HAP-1 (cell line): ENCODE measurements at regions of chr7 and their contacts with region 1.

Region 1: DNA sequence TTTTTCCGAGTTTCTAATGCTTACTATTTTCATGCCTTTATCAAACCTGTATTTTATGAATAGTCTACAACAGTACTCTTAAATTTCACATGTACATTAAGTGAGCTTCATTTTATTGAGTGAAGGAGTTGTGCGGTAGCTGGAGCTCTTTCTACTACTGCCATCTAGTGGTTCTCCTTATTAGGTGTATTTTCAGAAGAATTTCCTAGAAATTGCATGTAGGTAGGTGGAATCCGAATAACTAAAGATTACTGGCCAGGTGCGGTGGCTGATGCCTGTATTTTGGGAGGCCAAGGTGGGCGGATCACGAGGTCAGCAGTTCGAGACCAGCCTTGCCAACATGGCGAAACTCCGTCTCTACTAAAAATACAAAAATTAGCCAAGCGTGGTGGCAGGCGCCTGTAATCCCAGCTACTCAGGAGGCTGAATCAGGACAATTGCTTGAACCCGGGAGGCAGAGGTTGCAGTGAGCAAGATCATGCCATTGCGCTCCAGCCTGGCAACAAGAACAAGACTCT is 38.3 kb downstream of the LRRC72 start:
- DNase-seq: peak; percentile 25 to 76
- H3K4me3 ChIP-seq: no peak overlapping the region
- H3K4me1 ChIP-seq: peaks cover 3% of the 10 kb centered on the region
- H3K27me3 ChIP-seq: no peaks in the 10 kb centered on the region

Region 2: DNA sequence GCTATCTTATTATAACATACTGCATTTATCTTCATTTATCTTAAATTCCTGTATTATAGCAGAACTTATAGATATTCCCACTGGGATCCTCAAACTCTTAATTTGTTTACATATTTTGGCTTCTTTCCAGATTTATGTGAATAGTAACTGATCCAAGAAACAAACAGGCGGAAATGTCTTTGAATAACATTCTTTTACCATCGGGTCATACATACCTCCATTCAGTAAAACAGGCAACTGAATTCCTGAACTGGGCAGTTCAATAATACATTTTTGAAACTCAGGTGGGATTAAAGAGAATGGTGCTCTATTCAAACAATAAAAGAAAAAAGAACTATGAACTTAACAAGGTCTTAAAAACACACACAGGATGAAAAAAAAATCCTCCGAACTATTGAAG is 481.0 kb before region 1 on chr7:
- in situ Hi-C with region 1: loop called (anchors 10 kb)
- DNase-seq: peak in 1 of 2 experiments; percentile 40
- H3K4me3 ChIP-seq: no peak overlapping the region
- H3K4me1 ChIP-seq: 0 out of 2 replicates have a peak, but pooled peaks cover 2% of the 10 kb centered on the region
- H3K27me3 ChIP-seq: peaks cover 6% of the 10 kb centered on the region

Region 3: DNA sequence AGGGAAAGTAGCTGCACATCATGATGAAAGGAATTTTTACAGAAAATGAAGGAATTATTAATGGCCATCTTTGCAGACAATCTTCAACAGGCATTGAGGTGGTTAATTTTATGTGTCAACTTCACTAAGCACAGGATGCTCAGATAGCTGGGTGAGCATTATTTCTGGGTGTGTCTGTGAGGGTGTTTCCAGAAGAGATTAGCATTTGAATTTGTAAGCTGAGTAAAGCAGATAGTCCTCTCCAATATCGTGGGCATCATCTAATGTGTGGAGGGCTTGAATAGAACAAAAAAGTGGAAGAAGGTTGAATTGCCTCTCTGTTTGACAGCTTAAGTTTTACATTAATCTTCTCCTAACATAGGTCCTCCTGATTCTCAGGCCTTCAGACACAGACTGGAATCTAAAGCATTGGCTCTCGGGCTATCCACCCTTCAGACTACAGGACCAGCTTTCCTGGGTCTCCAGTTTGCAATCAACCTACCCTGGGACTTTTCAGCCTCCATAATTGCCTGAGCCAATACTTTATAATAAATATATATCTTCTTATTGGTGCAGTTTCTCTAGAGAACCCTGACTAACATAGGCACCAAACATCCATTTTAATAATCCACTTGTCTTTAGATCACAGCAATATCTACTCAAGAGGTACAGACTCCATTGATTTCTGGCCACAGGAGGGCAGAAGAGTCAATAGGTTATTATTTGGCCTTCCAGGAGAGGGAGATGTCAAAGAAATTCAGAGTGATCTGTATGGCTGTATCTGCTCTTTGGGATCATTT is 133.1 kb before region 1 on chr7:
- in situ Hi-C with region 1: loop called (anchors 25 kb)
- DNase-seq: peak; percentile 52 to 62
- H3K4me3 ChIP-seq: no peak overlapping the region
- H3K4me1 ChIP-seq: peaks cover 9% of the 10 kb centered on the region
- H3K27me3 ChIP-seq: no peaks in the 10 kb centered on the region